ENCODE measurements at regions of chr12 and their contacts with region 1.

Region 1: GRCh38 chr12:68451261-68452077 is 119.3 kb upstream of the MDM1 start:
- DNase-seq: peak; percentile 88
- ATAC-seq: peak; percentile 78
- H3K4me3 ChIP-seq: peak overlapping the region; percentile 51
- H3K27ac ChIP-seq: peak overlapping the region; percentile 73
- H3K4me1 ChIP-seq: peaks cover 36% of the 10 kb centered on the region
- H3K27me3 ChIP-seq: no peaks in the 10 kb centered on the region
- CTCF ChIP-seq: no peak
- EP300 ChIP-seq: peak; percentile 32 to 50; a peak in 2 of 4 replicates
- POLR2A ChIP-seq: no peak
- RAD21 ChIP-seq: no peak

Region 2: DNA sequence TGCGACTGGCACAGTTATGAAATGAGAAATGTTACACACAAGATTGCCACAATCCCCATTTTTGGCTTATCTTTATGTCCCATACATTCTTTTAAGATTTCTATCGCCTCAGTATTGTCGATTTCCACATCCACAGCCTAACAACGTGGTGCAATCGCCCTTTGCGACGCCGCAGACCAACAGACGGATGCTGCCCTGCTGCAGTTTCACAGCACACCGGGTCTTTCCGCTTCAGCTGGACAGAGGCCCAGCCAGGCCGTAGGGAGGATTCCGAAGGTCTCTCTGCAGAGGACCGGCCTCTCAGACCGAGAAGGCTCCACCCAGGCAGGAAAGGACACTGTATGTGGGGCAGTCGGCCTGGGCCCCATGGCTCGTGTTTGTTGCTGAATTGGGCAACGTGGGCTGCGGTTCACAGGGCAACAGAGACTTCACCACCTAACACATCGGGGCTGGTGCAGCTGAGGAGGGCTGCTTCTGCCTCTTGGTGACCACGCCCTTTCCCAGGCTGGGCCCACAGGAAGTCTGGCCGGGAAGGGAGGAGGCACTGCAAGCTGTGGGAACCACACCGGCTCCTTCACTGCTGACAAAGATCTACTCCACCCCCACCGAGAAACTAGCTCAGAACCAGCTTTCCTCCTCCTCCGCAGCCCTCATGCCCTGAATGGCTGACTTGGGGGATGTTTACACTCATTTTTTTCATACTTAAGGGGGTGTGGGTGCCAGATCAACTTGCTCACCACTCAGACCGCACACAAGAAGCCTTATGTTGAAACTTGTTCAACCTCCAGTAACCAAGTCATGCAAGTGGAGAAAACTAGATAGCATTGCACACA is 86.4 kb before region 1 on chr12:
- CTCF ChIA-PET with region 1: interaction called, 8 read pairs
- POLR2A ChIA-PET with region 1: interaction called, 6 read pairs
- RAD21 ChIA-PET with region 1: interaction called, 11 read pairs
- SMC1A ChIA-PET with region 1: interaction called, 28 read pairs
- in situ Hi-C with region 1: no loop called
- intact Hi-C with region 1: no loop called
- DNase-seq: peak; percentile 97
- ATAC-seq: peak; percentile 89
- H3K4me3 ChIP-seq: peak overlapping the region; percentile 53
- H3K27ac ChIP-seq: peak overlapping the region; percentile 94
- H3K4me1 ChIP-seq: peaks cover 23% of the 10 kb centered on the region
- H3K27me3 ChIP-seq: no peaks in the 10 kb centered on the region
- CTCF ChIP-seq: no peak
- EP300 ChIP-seq: peak; percentile 52 to 59; a peak in 3 of 4 replicates
- POLR2A ChIP-seq: peak; percentile 79
- RAD21 ChIP-seq: peak; percentile 10; the same call in 1 of the 2 replicates

Region 3: DNA sequence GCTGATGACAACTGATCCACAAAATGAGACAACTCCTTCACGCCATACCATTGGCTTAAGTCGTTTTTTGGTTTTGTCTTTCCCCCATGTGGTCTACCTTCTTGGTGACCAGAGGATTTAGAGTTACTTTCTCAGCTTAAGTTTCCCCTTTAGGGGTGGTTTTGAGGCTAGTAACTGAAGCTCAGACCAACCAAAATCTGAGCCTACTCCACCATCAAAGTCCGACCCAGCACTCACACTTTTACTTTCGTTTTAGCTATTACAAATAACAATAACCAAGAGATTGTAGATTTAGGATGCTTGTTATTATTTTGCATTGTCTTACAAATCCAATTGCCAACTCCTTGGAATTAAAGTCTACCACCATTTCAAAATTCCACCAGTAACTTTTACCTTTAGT is 11.3 kb after region 1 on chr12:
- CTCF ChIA-PET with region 1: interaction called, 17 read pairs
- POLR2A ChIA-PET with region 1: interaction called, 11 read pairs
- RAD21 ChIA-PET with region 1: interaction called, 17 read pairs
- SMC1A ChIA-PET with region 1: interaction called, 24 read pairs
- in situ Hi-C with region 1: no loop called
- intact Hi-C with region 1: no loop called
- DNase-seq: no peak
- ATAC-seq: peak; percentile 88
- H3K4me3 ChIP-seq: peak overlapping the region; percentile 9; the same call in 1 of the 2 replicates
- H3K27ac ChIP-seq: peak overlapping the region; percentile 13; the same call in 1 of the 2 replicates
- H3K4me1 ChIP-seq: no peaks in the 10 kb centered on the region
- H3K27me3 ChIP-seq: no peaks in the 10 kb centered on the region
- CTCF ChIP-seq: no peak
- EP300 ChIP-seq: no peak
- POLR2A ChIP-seq: no peak
- RAD21 ChIP-seq: no peak

Region 4: DNA sequence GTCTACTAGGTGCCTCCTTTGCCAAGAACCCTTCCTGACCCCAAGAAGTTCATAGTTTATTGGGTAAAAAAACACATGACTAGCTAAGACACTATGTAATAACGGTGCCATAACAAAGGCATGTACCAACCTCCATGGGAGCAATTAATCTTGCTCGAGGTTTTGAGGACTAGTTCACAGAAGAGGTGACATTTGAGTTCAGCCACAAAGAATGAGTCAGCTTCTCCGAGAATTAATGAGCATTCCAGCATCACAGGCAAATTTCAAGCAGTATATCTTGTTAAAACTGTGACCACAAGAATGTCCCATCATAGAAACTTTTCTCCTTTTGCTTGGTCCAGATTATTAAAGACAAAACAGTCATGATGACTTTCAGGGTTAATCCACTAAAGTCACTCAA is 46.2 kb after region 1 on chr12:
- CTCF ChIA-PET with region 1: no interaction called
- POLR2A ChIA-PET with region 1: interaction called, 3 read pairs
- RAD21 ChIA-PET with region 1: interaction called, 10 read pairs
- SMC1A ChIA-PET with region 1: interaction called, 3 read pairs
- in situ Hi-C with region 1: no loop called
- intact Hi-C with region 1: no loop called
- DNase-seq: peak; percentile 50
- ATAC-seq: peak; percentile 82
- H3K4me3 ChIP-seq: no peak overlapping the region
- H3K27ac ChIP-seq: no peak overlapping the region
- H3K4me1 ChIP-seq: peaks cover 27% of the 10 kb centered on the region
- H3K27me3 ChIP-seq: no peaks in the 10 kb centered on the region
- CTCF ChIP-seq: no peak
- EP300 ChIP-seq: no peak
- POLR2A ChIP-seq: no peak
- RAD21 ChIP-seq: no peak

Region 5: DNA sequence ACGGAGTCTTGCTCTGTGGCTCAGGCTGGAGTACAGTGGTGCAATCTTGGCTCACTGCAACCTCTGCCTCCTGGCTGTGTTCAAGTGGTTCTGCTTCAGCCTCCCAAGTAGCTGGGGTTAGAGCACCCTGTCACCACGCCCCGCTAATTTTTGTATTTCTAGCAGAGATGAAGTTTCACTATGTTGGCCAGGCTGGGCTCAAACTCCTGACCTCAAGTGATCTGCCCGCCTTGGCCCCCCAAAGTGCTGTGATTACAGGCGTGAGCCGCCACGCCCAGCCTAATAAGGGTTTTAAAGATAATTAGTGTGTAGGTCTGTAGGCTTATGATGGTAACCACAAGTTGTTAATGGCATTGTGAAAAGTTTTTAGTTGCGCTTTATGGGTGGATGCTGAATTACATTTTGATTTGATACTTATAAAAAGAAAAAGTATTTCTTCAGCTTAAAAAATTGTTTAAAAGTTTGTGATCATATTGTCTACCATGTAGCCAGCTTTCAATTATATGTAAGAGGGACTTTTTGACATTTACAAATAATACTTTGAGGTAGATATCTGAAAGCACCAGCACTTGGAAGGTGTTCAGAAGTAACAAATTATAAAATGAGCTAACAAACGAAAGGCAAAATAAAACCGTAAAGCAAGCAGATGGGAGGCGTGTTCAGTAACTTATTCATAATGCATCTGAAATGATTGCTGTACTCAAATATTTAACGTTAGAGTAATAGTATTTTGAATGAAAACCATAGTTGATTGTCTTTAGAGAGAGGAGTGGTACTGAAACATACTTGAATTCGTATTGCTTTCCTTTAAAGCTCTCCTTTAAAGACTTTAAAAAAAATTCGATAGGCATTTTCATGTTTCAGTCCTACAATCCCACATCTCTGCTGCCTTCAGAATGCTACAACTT is 393.6 kb after region 1 on chr12:
- CTCF ChIA-PET with region 1: no interaction called
- POLR2A ChIA-PET with region 1: interaction called, 12 read pairs
- RAD21 ChIA-PET with region 1: no interaction called
- SMC1A ChIA-PET with region 1: no interaction called
- in situ Hi-C with region 1: no loop called
- intact Hi-C with region 1: no loop called
- DNase-seq: no peak
- ATAC-seq: peak; percentile 20
- H3K4me3 ChIP-seq: no peak overlapping the region
- H3K27ac ChIP-seq: no peak overlapping the region
- H3K4me1 ChIP-seq: no peaks in the 10 kb centered on the region
- H3K27me3 ChIP-seq: no peaks in the 10 kb centered on the region
- CTCF ChIP-seq: no peak
- EP300 ChIP-seq: no peak
- POLR2A ChIP-seq: no peak
- RAD21 ChIP-seq: no peak

Region 6: GRCh38 chr12:69157023-69157655 is 705.7 kb after region 1 on chr12:
- CTCF ChIA-PET with region 1: no interaction called
- POLR2A ChIA-PET with region 1: no interaction called
- RAD21 ChIA-PET with region 1: no interaction called
- SMC1A ChIA-PET with region 1: no interaction called
- in situ Hi-C with region 1: no loop called
- intact Hi-C with region 1: no loop called
- DNase-seq: peak; percentile 64
- ATAC-seq: peak; percentile 94
- H3K4me3 ChIP-seq: no peak overlapping the region
- H3K27ac ChIP-seq: no peak overlapping the region
- H3K4me1 ChIP-seq: peaks cover 18% of the 10 kb centered on the region
- H3K27me3 ChIP-seq: no peaks in the 10 kb centered on the region
- CTCF ChIP-seq: peak; percentile 95 to 100 (median 99); a peak in 5 of 6 replicates
- EP300 ChIP-seq: no peak
- POLR2A ChIP-seq: peak; percentile 35; the same call in 1 of the 2 replicates
- RAD21 ChIP-seq: peak; percentile 66

Measured in GM12878 (cell line).